Left ventricle myocardium superior (tissue), 1 donor: ENCODE measurements at regions of chr4 and their contacts with region 1.

Region 1: DNA sequence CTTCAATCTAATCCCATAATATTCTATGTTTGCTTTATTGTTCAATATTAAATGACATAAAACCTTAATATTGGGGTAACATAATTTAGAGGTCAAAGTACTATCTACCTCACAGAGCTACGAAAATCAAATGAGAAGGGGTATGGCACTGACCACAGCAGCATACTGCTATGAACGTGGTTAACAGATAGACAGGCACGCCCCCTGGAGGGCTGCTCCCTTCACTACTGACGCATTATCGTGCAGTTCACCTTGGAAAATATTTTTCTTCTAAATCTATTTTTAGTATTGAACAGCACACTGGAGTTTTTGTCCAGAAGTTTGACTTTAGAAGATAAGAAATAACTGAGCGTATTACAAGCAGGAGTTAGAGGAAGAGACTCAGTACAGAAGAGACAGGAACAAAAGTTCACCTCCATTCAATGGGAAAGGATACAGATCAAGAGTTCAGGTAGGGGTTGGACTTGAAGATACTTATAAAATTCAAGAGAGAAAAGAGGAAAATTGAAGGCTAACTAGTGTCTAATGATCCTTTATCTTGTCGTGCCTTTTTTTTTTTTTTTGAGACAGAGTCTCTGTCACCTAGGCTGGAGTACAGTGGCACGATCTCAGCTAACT is 22.7 kb downstream of the MAP9 start:
- DNase-seq: peak; percentile 83
- ATAC-seq: peak; percentile 83

Region 2: GRCh38 chr4:154807042-154807630 is 546.9 kb before region 1 on chr4:
- intact Hi-C with region 1: loop called (anchors 10 kb)
- DNase-seq: no peak
- ATAC-seq: no peak

Region 3: DNA sequence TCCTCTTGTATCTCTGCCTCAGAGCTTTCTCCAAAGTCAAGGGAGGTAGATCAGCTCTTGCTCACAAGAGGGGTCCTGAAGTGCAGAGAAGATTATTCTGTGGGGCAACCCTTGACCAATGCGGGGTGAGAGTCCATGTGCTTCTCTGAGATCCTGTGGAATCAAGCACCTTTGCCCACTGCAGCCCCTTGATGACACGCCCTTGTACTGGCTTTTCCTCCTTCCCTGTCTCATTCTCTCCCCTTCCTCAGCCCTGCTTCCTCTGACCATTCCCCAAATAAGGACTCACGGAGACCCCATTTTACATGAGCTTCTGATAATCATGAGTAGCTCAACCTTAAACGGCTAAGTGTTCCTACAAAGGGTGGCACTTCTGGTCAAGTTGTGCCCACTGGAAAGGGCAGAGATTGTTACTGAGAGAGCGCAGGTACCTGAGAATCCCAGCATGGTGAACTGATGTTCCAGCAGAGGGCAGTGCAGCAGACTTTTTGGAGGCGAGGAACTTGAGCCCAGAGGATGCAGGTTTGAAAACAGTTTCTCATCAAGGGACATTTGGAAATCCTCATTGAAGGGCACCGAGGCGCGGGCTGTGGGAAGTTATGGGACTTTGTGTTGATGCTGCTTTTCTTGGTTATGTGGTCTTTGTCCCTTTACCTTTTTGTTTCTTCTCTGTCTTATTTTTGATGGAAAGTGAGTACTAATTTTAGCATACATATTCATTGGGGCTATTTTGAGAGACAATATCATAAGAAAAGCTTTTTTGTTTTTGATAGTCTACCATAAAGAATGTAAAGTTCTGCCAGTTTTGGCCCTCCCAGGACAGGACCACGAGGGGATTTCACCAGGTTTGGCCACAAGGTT is 371.6 kb before region 1 on chr4:
- intact Hi-C with region 1: loop called (anchors 10 kb)
- DNase-seq: peak; percentile 46
- ATAC-seq: peak; percentile 58